ENCODE measurements at regions of chr11 and their contacts with region 1.

Region 1: GRCh38 chr11:3217676-3218482 is 734 bp downstream of the MRGPRG start:
- DNase-seq: peak in 1 of 2 donors; percentile 58
- H3K4me3 ChIP-seq: no peak overlapping the region
- H3K27ac ChIP-seq: no peak overlapping the region
- H3K4me1 ChIP-seq: no peaks in the 10 kb centered on the region
- H3K27me3 ChIP-seq: peaks cover 5% of the 10 kb centered on the region
- CTCF ChIP-seq: no peak

Region 2: DNA sequence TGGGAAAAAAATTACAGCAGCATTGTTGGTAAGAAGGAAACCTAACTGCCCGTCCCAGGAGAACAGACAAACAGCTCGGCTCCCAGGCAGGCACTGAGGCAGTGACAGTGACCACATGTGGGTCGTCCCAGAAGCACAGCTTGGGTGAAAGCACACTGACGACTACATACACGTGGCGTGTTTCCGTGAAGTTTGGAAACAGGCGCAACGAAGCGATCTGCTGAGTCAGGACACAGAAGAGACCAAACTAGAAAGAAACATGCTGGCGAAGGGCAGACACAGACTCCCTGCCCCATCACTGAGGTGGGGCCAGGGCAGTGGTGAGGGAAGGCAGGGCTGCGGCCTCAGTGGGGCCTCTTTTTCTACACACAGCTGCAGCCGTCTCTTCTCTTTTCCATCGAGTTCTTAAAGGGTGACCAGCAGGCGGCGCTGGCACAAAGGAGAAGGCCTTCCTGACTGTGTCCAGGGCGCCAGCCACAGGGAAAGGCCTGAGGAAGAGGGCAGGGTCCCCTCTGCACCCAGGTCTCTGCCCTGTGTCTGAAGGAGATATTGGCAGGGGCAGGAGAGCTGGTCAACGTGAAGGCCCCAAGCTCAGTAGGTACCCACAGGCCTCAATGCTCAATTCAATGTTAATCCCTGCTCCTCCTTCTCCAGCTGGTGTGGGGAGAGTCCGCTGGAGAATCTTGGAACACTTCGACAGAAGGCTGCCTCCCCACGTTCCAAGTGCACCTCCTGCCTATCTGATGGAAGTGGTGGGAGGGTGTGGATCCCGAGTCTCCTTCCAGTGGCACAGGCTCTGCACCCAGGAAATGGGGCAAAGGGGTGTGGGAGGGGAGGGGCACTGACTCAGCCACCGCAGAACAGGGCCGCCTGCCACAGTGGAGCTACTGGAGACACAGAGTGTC is 180.6 kb before region 1 on chr11:
- intact Hi-C with region 1: loop called (anchors 5 kb)
- DNase-seq: peak; percentile 42 to 88
- H3K4me3 ChIP-seq: no peak overlapping the region
- H3K27ac ChIP-seq: no peak overlapping the region
- H3K4me1 ChIP-seq: no peaks in the 10 kb centered on the region
- H3K27me3 ChIP-seq: no peaks in the 10 kb centered on the region
- CTCF ChIP-seq: peak; percentile 60 to 86 (median 83)

Region 3: GRCh38 chr11:3109921-3110706 is 107.8 kb before region 1 on chr11:
- intact Hi-C with region 1: loop called (anchors 1 kb)
- DNase-seq: peak in 1 of 2 donors; percentile 65
- H3K4me3 ChIP-seq: no peak overlapping the region
- H3K27ac ChIP-seq: no peak overlapping the region
- H3K4me1 ChIP-seq: no peaks in the 10 kb centered on the region
- H3K27me3 ChIP-seq: no peaks in the 10 kb centered on the region
- CTCF ChIP-seq: peak; percentile 53 to 67 (median 55)

Region 4: DNA sequence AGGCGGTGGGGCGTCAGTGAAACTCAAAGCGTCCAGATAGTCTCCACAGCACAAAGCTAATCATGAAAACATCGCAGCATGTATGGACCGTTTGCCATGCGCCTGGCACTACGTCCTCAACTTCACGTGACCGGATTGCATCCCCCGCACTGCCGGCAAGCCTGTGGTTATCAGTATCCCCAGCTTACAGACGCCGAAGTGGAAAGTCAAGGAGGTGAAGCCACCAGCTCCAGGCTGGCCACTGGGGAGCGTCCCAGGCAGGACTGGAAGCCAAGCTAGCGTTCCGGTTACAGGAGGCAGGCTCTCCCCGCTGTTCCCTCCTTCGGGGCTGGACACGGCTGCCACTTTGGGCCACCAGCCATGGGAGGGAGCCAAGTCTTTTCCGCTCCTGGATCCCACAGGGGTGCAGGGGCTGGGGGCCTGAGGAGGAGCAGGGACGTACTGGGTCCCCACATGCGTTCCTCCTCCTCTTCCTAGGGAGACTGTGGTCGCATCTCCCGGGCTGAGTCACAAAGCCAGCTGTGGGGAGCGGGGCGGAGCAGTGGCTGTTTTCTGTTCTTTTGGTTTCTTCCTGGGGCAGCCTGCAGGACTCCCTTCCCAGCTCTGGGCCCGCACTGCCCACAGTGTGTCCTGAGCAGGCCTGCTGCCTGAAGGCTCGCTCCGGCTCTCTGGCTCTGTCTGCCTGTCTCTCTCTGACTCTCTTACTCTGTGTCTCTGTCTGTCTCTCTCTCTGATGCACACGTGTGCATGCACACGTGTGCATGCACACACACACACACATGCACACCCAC is 48.4 kb before region 1 on chr11:
- intact Hi-C with region 1: loop called (anchors 5 kb)
- DNase-seq: no peak
- H3K4me3 ChIP-seq: peak overlapping the region; percentile 37 to 64
- H3K27ac ChIP-seq: peak overlapping the region; percentile 66 to 91
- H3K4me1 ChIP-seq: peaks cover 9 to 22% of the 10 kb centered on the region in 2 donors
- H3K27me3 ChIP-seq: no peaks in the 10 kb centered on the region
- CTCF ChIP-seq: peak in 1 of 3 experiments; percentile 25